RWPE1 (cell line): ENCODE measurements at regions of chr5 and their contacts with region 1.

Region 1: GRCh38 chr5:169302491-169303118 is 1.7 kb upstream of the SLIT3 start:
- DNase-seq: peak; percentile 89
- H3K27ac ChIP-seq: peak overlapping the region; percentile 64
- CTCF ChIP-seq: peak; percentile 96

Region 2: DNA sequence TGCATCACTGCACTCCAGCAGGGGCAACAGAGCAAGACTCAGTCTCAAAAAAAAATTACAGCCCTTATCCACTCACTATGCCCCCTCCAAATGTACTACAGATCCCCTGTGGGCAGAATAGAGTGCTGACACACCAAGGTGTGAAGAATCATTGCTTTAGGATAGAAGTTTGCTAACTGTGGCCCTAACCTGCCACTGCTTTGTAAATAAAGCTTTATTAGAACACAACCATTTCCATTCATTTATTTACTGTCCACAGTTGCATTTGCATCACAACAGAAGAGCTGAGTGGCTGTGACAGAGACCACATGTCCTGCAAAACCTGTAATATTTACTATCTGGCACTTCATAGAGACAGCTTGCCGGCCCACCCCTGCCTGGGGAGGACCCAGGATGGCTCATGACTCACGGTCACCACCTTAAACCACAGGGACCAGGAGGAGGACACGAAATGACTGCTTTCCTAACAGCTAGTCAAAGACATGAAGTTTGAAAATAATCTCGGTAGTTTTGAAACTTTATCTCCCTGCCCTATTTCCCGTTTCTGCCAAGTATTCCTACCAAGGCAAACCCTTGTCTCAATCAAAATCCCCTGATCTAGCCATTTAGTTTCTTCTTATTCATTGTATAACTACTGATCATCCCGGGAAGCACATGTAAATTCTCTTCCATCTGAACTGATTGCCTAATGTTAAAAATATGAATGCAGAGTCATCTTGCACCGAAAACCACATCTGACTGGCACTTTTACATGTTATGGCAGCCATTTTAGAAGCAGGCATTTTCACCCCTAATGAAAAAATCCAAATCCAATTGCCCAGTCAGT is 207.8 kb before region 1 on chr5:
- CTCF ChIA-PET with region 1: no interaction called
- POLR2A ChIA-PET with region 1: no interaction called
- DNase-seq: no peak
- H3K27ac ChIP-seq: peak overlapping the region; percentile 54
- CTCF ChIP-seq: no peak

Region 3: GRCh38 chr5:169291877-169292276 is 10.7 kb before region 1 on chr5:
- CTCF ChIA-PET with region 1: interaction called, 12 read pairs
- POLR2A ChIA-PET with region 1: no interaction called
- DNase-seq: no peak
- H3K27ac ChIP-seq: no peak overlapping the region
- CTCF ChIP-seq: no peak

Region 4: GRCh38 chr5:169339869-169340268 is 37.3 kb after region 1 on chr5:
- CTCF ChIA-PET with region 1: no interaction called
- POLR2A ChIA-PET with region 1: no interaction called
- DNase-seq: no peak
- H3K27ac ChIP-seq: no peak overlapping the region
- CTCF ChIP-seq: no peak

Region 5: GRCh38 chr5:169494941-169495548 is 192.4 kb after region 1 on chr5:
- CTCF ChIA-PET with region 1: no interaction called
- POLR2A ChIA-PET with region 1: no interaction called
- DNase-seq: no peak
- H3K27ac ChIP-seq: no peak overlapping the region
- CTCF ChIP-seq: no peak